Naive thymus-derived CD4-positive, alpha-beta T cell (primary cell): ENCODE measurements at regions of chr7 and their contacts with region 1.

Region 1: GRCh38 chr7:40134428-40135316 is at the starts of genes MPLKIP and SUGCT:
- DNase-seq: peak; percentile 81 to 95 (median 91)
- ATAC-seq: peak; percentile 97
- H3K4me3 ChIP-seq: peak within 1 kb of the TSS; percentile 100
- H3K4me3 Mint-ChIP-seq: peak within 1 kb of the TSS; percentile 86 to 99 (median 97)
- H3K27ac ChIP-seq: peak within 1 kb of the TSS; percentile 92
- H3K27ac Mint-ChIP-seq: peak within 1 kb of the TSS; percentile 92 to 98 (median 97)
- H3K4me1 ChIP-seq: peaks cover 21 to 31% of the 10 kb centered on the region in 2 donors
- H3K4me1 Mint-ChIP-seq: peaks cover 15 to 44% (median 31%) of the 10 kb centered on the region in 7 donors
- H3K27me3 ChIP-seq: no peaks in the 10 kb centered on the region
- H3K27me3 Mint-ChIP-seq: peaks cover 0 to 17% (median 0%) of the 10 kb centered on the region in 5 donors
- total RNA-seq, gene MPLKIP: 17.2 to 40.1 (median 33.5) TPM
- total RNA-seq, gene SUGCT: 2.2 to 2.7 (median 2.4) TPM in 4 of 5 experiments, not detected in the other

Region 2: GRCh38 chr7:38369816-38370493 is 1764.7 kb before region 1 on chr7:
- CTCF ChIA-PET with region 1: no interaction called
- POLR2A ChIA-PET with region 1: no interaction called
- intact Hi-C with region 1: loop called in 1 of 2 experiments (anchors 10 kb)
- DNase-seq: peak; percentile 39 to 79 (median 63)
- ATAC-seq: peak; percentile 89
- H3K4me3 ChIP-seq: no peak overlapping the region
- H3K4me3 Mint-ChIP-seq: peak overlapping the region; percentile 9 to 64 (median 56)
- H3K27ac ChIP-seq: peak overlapping the region; percentile 64
- H3K27ac Mint-ChIP-seq: peak overlapping the region in 8 of 9 donors; percentile 85 to 97 (median 92)
- H3K4me1 ChIP-seq: peaks cover 47% of the 10 kb centered on the region in 2 donors
- H3K4me1 Mint-ChIP-seq: peaks cover 33 to 79% (median 69%) of the 10 kb centered on the region in 7 donors
- H3K27me3 ChIP-seq: no peaks in the 10 kb centered on the region
- H3K27me3 Mint-ChIP-seq: no peaks in the 10 kb centered on the region

Region 3: GRCh38 chr7:39566023-39566921 is 568.4 kb before region 1 on chr7 and contains the start of gene YAE1:
- CTCF ChIA-PET with region 1: no interaction called
- POLR2A ChIA-PET with region 1: no interaction called
- intact Hi-C with region 1: loop called (anchors 1 kb)
- DNase-seq: peak; percentile 63 to 81 (median 75)
- ATAC-seq: peak; percentile 95
- H3K4me3 ChIP-seq: peak within 1 kb of the TSS; percentile 88
- H3K4me3 Mint-ChIP-seq: peak within 1 kb of the TSS; percentile 98 to 100 (median 99)
- H3K27ac ChIP-seq: peak within 1 kb of the TSS; percentile 81
- H3K27ac Mint-ChIP-seq: peak within 1 kb of the TSS; percentile 93 to 99 (median 96)
- H3K4me1 ChIP-seq: peaks cover 7 to 11% of the 10 kb centered on the region in 2 donors
- H3K4me1 Mint-ChIP-seq: peaks cover 13 to 50% (median 25%) of the 10 kb centered on the region in 7 donors
- H3K27me3 ChIP-seq: no peaks in the 10 kb centered on the region
- H3K27me3 Mint-ChIP-seq: peaks cover 0 to 15% (median 0%) of the 10 kb centered on the region in 5 donors
- total RNA-seq, gene YAE1: 10.2 to 34.2 (median 15.3) TPM

Region 4: DNA sequence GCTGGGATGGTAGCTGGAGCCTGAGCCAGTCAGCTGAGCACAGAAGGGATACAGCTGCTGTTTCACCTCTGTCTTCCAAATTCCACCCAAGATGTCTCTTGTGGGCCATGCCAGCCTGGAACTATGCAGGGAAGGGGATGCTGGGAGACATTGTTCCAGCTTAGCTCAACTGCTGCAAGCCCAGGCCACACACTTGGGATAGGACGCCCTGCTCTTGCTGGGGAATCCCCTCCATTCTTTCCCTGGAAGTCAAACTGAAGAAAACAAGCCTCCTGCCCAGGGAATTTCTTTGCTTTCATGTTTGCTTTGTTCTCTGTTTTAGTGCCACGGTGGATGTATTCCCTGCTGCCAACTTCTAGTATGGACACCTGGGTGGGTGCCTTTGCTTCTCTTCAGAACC is 239.8 kb before region 1 on chr7:
- CTCF ChIA-PET with region 1: no interaction called
- POLR2A ChIA-PET with region 1: no interaction called
- intact Hi-C with region 1: loop called (anchors 1 kb)
- DNase-seq: no peak
- ATAC-seq: no peak
- H3K4me3 ChIP-seq: no peak overlapping the region
- H3K4me3 Mint-ChIP-seq: no peak overlapping the region
- H3K27ac ChIP-seq: no peak overlapping the region
- H3K27ac Mint-ChIP-seq: no peak overlapping the region
- H3K4me1 ChIP-seq: no peaks in the 10 kb centered on the region
- H3K4me1 Mint-ChIP-seq: peaks cover 0 to 3% (median 0%) of the 10 kb centered on the region in 7 donors
- H3K27me3 ChIP-seq: no peaks in the 10 kb centered on the region
- H3K27me3 Mint-ChIP-seq: peaks cover 0 to 15% (median 4%) of the 10 kb centered on the region in 5 donors

Region 5: GRCh38 chr7:40033826-40034225 is 100.8 kb before region 1 on chr7:
- CTCF ChIA-PET with region 1: no interaction called
- POLR2A ChIA-PET with region 1: no interaction called
- intact Hi-C with region 1: no loop called
- DNase-seq: no peak
- ATAC-seq: no peak
- H3K4me3 ChIP-seq: no peak overlapping the region
- H3K4me3 Mint-ChIP-seq: peak overlapping the region in 1 of 10 donors; percentile 10
- H3K27ac ChIP-seq: no peak overlapping the region
- H3K27ac Mint-ChIP-seq: peak overlapping the region in 7 of 9 donors; percentile 9 to 57 (median 32)
- H3K4me1 ChIP-seq: no peaks in the 10 kb centered on the region
- H3K4me1 Mint-ChIP-seq: peaks cover 9 to 50% (median 29%) of the 10 kb centered on the region in 7 donors
- H3K27me3 ChIP-seq: no peaks in the 10 kb centered on the region
- H3K27me3 Mint-ChIP-seq: no peaks in the 10 kb centered on the region

Region 6: GRCh38 chr7:40077849-40078248 is 56.8 kb before region 1 on chr7:
- CTCF ChIA-PET with region 1: no interaction called
- POLR2A ChIA-PET with region 1: no interaction called
- intact Hi-C with region 1: loop called in 1 of 2 experiments (anchors 5 kb)
- DNase-seq: no peak
- ATAC-seq: no peak
- H3K4me3 ChIP-seq: no peak overlapping the region
- H3K4me3 Mint-ChIP-seq: no peak overlapping the region
- H3K27ac ChIP-seq: no peak overlapping the region
- H3K27ac Mint-ChIP-seq: no peak overlapping the region
- H3K4me1 ChIP-seq: peaks cover 0 to 3% of the 10 kb centered on the region in 2 donors
- H3K4me1 Mint-ChIP-seq: peaks cover 0 to 4% (median 0%) of the 10 kb centered on the region in 7 donors
- H3K27me3 ChIP-seq: no peaks in the 10 kb centered on the region
- H3K27me3 Mint-ChIP-seq: no peaks in the 10 kb centered on the region

Region 7: DNA sequence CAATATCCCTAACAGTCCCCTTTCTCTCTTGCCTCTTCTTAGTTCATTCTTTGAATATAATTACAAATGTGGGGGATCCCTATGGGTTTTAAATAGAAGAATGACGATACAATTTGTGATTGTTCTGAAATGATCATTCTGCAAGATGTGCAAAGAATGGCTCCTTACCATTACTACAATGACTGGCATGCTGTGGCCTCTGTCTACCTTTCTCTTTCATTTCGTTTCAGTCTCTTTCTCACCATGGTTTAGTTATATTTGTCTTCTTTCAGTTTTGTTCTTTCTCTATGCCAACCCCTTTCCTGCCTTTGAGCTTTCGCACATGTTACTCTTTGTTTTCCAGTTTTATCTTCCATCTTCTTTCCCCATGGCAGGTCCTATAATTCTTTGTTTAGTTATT is 176.6 kb after region 1 on chr7:
- CTCF ChIA-PET with region 1: no interaction called
- POLR2A ChIA-PET with region 1: no interaction called
- intact Hi-C with region 1: no loop called
- DNase-seq: no peak
- ATAC-seq: no peak
- H3K4me3 ChIP-seq: no peak overlapping the region
- H3K4me3 Mint-ChIP-seq: no peak overlapping the region
- H3K27ac ChIP-seq: no peak overlapping the region
- H3K27ac Mint-ChIP-seq: no peak overlapping the region
- H3K4me1 ChIP-seq: no peaks in the 10 kb centered on the region
- H3K4me1 Mint-ChIP-seq: peaks cover 0 to 6% (median 0%) of the 10 kb centered on the region in 7 donors
- H3K27me3 ChIP-seq: no peaks in the 10 kb centered on the region
- H3K27me3 Mint-ChIP-seq: peaks cover 0 to 5% (median 0%) of the 10 kb centered on the region in 5 donors

Region 8: GRCh38 chr7:40455485-40455884 is 320.8 kb after region 1 on chr7:
- CTCF ChIA-PET with region 1: no interaction called
- POLR2A ChIA-PET with region 1: no interaction called
- intact Hi-C with region 1: no loop called
- DNase-seq: no peak
- ATAC-seq: no peak
- H3K4me3 ChIP-seq: no peak overlapping the region
- H3K4me3 Mint-ChIP-seq: no peak overlapping the region
- H3K27ac ChIP-seq: no peak overlapping the region
- H3K27ac Mint-ChIP-seq: no peak overlapping the region
- H3K4me1 ChIP-seq: no peaks in the 10 kb centered on the region
- H3K4me1 Mint-ChIP-seq: peaks cover 0 to 1% (median 0%) of the 10 kb centered on the region in 7 donors
- H3K27me3 ChIP-seq: no peaks in the 10 kb centered on the region
- H3K27me3 Mint-ChIP-seq: no peaks in the 10 kb centered on the region